Head of caudate nucleus (tissue), 42 donors: ENCODE measurements at regions of chr2 and their contacts with region 1.

Region 1: DNA sequence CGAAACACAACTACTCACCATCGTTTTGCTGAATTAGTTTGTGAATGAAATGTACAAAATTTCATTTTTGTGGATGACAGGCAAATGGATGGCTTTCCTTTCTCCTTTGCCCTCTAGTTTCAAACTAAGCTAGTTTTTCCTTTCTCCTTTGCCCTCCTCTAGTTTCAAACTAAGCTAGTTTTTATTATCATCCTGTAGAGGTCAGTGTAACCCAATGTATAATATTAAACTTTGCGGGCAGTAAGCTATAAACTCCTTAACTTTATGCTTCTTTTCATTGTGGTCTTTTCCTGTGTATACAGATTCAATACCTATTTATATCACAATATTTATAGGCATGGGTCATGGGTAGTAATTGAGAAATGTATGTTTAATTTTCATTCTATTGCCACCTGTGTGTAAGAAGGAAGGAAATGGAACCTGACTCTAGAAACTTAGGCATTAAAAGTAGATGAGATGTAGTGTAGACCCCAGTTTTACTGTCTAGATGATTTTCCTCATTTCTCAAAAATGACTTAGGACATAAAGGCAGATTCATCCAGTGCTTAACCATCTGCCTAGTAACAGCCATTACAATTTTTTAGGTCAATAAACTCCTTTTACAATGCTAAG is 58.1 kb downstream of the MAP3K19 start:
- DNase-seq: no peak

Region 2: GRCh38 chr2:134706587-134707329 is 282.3 kb before region 1 on chr2:
- intact Hi-C with region 1: no loop called
- DNase-seq: peak in 18 of 42 donors; percentile 8 to 59 (median 23)

Region 3: DNA sequence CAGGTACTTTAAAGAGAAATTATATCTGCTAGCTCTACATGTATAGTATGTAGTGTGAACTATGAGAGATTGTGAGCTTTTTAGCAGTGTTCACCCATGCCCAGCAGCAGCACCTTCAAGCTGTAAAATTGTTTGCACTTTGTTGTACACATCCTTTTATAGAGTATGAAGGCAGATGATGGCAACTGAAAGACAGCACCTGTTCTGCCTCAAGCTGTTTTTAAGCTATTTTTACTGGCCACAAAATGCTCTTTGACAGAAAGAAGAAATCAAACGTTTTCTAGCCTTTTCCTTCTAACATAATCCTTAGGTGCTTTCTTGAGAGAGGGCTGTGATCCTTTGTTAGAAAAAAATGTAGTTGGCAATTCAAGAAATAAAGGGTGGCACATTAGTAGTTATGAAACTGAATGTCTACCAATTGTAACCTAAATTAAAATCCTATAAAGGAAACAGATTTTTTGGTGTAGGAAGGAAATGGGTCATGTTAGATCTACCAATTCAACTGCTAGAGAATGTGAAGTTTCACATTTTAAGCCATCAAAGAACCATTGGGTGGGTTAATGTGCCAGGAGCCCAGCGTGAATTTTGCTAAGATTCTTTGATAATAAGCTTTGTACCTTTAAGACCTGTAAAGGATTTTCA is 601.6 kb after region 1 on chr2:
- intact Hi-C with region 1: loop called (anchors 10 kb)
- DNase-seq: no peak